Activated naive CD4-positive, alpha-beta T cell treated with anti-CD3 and anti-CD28 coated beads for 36 hours (primary cell): ENCODE measurements at regions of chr4 and their contacts with region 1.

Region 1: DNA sequence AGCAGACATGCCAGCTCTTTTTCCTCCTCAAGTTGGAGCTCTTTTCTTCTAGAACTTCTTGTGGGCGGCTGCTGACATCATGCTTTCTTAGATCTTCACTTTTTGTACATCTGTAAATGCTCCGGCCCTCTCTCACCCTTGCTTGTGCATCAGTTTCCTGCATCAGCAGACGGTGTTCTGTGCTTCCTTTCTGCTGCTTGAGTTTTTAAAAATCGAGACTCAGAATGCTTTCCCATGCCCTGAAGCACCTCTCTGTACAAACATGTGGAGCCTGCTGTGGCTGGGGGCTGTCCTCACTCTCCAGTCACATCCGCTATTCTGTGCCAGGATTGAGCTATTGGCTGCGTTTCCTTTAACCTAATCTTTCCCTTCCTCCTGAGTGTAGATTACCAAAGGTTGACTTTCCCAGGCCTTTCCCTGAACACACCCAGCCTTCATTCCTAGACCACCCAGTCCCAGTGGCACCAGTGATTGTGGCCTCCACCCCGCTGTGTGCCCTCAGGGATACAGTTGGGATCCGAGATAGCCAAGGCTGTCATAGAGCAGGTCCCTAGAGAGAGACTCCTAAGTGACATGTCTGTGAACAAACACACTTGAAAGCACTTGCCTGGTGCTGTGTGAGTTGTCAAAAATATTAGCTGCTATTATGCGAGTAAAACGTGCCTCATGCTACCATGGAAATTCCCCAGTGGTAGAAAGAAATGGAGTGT is 41.9 kb downstream of the TNIP2 start:
- DNase-seq: peak; percentile 81
- H3K4me3 Mint-ChIP-seq: peak overlapping the region; percentile 7
- H3K27ac Mint-ChIP-seq: peak overlapping the region; percentile 86
- H3K4me1 Mint-ChIP-seq: peaks cover 40% of the 10 kb centered on the region
- H3K27me3 Mint-ChIP-seq: no peaks in the 10 kb centered on the region

Region 2: DNA sequence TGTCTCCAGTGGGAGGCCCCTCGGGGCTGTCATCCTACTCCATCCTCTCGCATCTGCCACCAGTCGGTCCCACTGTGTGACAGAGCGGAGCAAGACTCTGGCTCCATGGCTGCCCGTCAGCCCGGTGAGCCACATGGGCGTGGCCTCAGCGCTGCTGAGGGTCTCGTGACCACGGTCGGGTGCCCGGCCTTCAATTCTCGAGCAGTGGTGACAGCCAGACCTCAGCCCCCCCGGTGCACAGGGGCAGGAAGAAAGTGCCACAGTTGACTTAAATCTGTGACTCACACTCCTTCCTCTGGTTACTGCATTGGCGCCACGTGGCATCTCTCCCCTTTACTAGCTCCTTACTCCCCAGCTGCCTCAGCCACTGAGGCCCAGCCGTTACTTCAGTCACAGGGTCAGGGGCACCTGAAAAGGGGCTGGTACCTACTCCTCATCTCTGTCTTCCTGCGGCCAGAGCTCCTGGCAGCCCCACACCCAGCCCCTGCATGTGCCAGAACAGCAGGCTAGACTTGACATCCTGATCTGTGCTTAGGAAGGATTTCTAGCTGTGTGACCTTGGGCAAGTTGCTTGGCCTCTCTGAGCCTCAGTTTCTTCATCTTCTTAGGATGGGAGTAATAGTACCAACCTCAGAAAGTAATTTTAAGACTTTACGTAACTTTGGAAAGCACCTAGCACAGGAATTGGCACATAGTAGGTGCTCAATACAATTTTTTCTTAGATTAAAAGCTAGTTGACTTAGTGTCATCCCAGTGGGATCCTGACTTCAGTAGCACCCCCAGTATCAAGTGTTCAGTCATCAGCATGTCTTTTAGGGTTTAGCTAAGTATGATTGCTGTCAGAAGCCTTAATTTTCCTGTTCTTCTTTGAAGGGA is 24.2 kb before region 1 on chr4:
- CTCF ChIA-PET with region 1: interaction called, 4 read pairs
- intact Hi-C with region 1: loop called (anchors 1 kb)
- DNase-seq: peak; percentile 59
- H3K4me3 Mint-ChIP-seq: no peak overlapping the region
- H3K27ac Mint-ChIP-seq: peak overlapping the region; percentile 47
- H3K4me1 Mint-ChIP-seq: peaks cover 34% of the 10 kb centered on the region
- H3K27me3 Mint-ChIP-seq: no peaks in the 10 kb centered on the region